Activated CD8-positive, alpha-beta memory T cell treated with anti-CD3 and anti-CD28 coated beads, Interleukin-2, amount 10 ng/mL, durations not matched to agents 7 days and 5 days (primary cell): ENCODE measurements at regions of chr9 and their contacts with region 1.

Region 1: GRCh38 chr9:127525401-127526187 is 74.3 kb downstream of the LRSAM1 start:
- DNase-seq: peak; percentile 51
- ATAC-seq: peak; percentile 55
- H3K4me3 Mint-ChIP-seq: no peak overlapping the region
- H3K27ac Mint-ChIP-seq: no peak overlapping the region
- H3K4me1 Mint-ChIP-seq: peaks cover 16% of the 10 kb centered on the region
- H3K27me3 Mint-ChIP-seq: no peaks in the 10 kb centered on the region

Region 2: GRCh38 chr9:127396808-127397497 is 128.6 kb before region 1 on chr9 and contains the start of gene SLC2A8:
- CTCF ChIA-PET with region 1: no interaction called
- DNase-seq: peak; percentile 99
- ATAC-seq: peak; percentile 94
- H3K4me3 Mint-ChIP-seq: peak within 1 kb of the TSS; percentile 68
- H3K27ac Mint-ChIP-seq: peak within 1 kb of the TSS; percentile 43
- H3K4me1 Mint-ChIP-seq: peaks cover 18% of the 10 kb centered on the region
- H3K27me3 Mint-ChIP-seq: peaks cover 28% of the 10 kb centered on the region
- total RNA-seq, gene SLC2A8: 12.1 to 26.0 TPM

Region 3: DNA sequence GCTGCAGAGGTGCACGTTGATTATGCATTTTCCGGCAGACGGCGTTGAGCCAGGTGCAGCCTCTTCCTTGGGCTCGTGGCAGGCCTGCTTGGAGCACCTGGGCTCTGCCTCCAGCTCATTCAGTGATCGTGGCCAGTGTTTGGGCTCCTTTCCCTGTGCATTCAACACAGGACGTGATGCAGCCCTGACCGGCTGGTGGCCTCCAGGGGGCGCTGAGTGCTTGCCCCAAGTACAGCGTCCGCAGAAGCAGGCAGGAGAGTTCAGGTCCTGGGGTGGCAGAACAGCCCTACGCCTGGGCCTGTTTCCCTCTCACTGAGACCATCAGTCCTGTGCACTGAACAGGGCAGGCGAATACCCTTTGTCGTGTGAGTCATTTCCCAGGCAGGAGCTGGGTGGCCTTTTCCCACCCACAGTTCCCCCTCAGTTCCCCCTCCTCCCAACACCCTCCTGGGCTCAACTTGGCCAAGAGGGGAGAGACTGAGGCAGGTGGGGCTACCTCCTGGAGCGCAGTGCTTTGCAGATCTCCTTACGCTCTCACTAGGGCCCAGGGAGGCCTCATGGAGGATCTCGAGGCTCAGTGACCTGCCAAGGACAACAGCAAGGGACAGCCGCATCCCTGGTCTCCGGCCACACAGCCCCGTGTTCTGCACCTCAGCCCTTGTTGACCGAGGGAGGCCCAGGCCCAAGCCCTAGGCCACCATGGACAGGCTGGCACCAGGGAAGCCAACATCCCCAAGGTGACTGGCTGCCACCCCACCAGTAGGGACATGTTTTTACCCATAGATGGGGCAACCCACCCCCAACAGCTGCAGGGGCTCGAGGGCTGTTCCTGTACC is 21.4 kb before region 1 on chr9:
- CTCF ChIA-PET with region 1: interaction called, 11 read pairs
- DNase-seq: peak; percentile 88
- ATAC-seq: peak; percentile 93
- H3K4me3 Mint-ChIP-seq: no peak overlapping the region
- H3K27ac Mint-ChIP-seq: no peak overlapping the region
- H3K4me1 Mint-ChIP-seq: peaks cover 6% of the 10 kb centered on the region
- H3K27me3 Mint-ChIP-seq: no peaks in the 10 kb centered on the region

Region 4: DNA sequence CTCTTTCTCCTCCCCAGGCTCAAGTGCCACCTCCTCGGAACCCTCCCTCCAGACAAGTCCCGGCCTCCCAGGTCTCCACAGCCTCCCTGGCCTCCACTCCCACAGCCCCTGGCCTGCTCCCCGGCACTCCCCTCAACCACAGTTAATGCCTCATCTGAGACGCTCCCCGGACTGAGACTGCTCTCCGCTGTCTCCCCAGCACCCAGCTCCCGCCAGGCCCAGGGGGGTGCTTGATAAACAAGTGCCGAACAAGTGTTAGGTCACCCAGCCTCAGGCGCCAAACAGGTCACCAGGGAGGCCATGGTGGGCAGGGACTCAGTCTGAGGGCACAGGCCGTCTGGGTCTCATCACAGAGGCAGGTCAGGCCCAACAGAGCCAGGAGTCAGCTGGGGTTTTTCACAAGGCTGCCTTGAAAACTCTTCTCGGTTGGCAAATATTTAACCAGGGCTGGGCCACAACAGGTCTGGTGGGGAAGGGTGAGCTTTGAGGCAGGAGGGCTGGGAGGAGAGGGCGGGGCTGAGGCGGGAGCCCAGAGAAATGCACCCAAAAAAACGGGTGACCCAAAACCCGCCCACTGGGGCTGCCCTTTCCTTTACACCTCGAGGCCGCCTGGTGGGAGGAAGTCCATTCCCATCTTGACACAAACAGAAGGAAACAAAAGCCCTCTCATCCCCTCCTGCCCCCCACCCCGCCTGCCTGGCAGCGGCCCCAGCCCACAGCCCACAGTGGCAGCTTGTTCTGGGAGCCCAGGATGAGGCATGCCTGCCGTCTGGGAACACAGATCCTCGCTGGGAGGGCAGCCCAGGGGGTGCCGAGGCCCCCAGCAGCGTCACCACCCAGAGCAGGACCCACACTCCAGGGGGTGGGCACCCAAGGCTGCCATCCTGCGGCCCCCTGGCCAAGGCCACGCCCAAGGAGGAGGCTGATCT is 19.9 kb after region 1 on chr9:
- CTCF ChIA-PET with region 1: interaction called, 15 read pairs
- DNase-seq: no peak
- ATAC-seq: no peak
- H3K4me3 Mint-ChIP-seq: no peak overlapping the region
- H3K27ac Mint-ChIP-seq: no peak overlapping the region
- H3K4me1 Mint-ChIP-seq: peaks cover 29% of the 10 kb centered on the region
- H3K27me3 Mint-ChIP-seq: no peaks in the 10 kb centered on the region

Region 5: DNA sequence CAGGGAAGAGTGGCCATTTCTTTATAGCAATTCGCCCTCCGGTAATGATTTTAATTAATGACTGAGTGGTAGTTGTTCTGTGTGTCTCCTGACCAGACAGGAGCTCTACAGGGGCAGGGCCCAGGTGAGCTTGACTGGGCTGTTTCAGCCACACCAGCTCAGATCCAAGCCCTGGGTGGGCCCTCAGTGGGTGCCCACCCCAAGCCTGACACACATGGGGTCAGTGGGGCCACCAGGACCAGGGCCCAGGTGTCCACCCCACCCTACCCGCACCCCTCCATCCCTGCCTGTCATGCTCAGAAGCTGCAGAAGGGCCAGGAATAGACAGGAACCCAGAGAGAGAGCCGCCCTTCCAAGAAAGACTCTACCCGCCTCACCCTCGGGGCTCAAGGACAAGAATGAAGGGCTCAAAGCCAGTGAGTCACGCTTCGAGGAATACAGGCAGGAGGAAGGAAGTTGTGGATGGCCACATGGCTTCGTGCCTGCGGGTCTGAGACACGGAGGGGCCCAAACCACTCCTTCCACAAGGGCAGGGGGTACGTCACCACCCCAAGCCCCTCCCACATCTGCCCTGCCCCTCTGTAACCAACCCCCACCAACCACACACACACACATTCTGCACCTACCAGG is 30.3 kb after region 1 on chr9:
- CTCF ChIA-PET with region 1: interaction called, 13 read pairs
- DNase-seq: peak; percentile 95
- ATAC-seq: peak; percentile 93
- H3K4me3 Mint-ChIP-seq: peak overlapping the region; percentile 56
- H3K27ac Mint-ChIP-seq: peak overlapping the region; percentile 93
- H3K4me1 Mint-ChIP-seq: peaks cover 77% of the 10 kb centered on the region
- H3K27me3 Mint-ChIP-seq: no peaks in the 10 kb centered on the region

Region 6: DNA sequence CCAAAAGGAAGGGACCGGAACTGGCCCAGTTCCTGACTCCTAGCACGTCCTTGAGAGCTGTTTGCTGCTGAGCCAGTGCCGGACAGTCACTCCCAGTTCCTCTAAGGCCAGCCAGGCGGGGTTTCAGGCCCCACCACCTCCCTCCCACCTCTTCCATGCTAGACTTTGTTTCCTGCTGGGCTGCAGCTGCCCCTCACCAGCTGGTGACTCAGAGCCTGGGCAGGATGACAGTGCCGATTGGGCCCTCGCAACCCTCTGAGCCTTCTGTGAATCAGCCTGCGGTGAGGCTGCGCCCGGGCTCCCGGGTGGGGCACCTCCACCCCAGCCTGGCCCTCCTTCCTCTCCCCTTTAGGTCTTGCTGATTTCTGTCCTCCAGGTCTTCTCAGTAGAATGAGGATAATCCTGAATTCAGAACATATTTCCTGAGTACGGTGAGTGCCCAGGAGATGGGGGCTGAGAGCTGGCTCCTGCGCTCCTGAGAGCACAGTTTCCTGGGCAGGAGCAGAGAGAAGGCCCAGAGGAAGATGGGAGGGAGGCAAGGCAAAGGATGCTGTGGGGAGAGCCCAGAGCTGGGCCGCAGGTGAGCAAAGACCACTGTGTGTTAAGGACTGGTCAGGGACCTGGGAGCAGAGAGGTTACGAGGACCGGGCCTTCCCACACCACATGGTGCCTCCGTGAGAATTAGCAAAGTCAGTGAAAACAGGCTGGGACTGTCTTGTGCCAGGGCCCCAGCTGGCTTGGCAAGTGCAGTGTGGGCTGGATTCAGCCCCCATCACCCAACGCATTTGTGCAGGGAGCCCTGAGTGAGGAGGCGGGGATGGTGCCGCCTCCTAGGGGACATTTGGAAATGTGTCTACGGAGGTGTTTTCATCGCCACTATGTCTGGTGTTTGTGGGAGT is 53.6 kb after region 1 on chr9:
- CTCF ChIA-PET with region 1: interaction called, 87 read pairs
- DNase-seq: peak; percentile 91
- ATAC-seq: peak; percentile 99
- H3K4me3 Mint-ChIP-seq: peak overlapping the region; percentile 76
- H3K27ac Mint-ChIP-seq: peak overlapping the region; percentile 90
- H3K4me1 Mint-ChIP-seq: peaks cover 54% of the 10 kb centered on the region
- H3K27me3 Mint-ChIP-seq: no peaks in the 10 kb centered on the region

Region 7: GRCh38 chr9:127586537-127586936 is 60.9 kb after region 1 on chr9:
- CTCF ChIA-PET with region 1: interaction called, 87 read pairs
- DNase-seq: peak; percentile 77
- ATAC-seq: peak; percentile 82
- H3K4me3 Mint-ChIP-seq: no peak overlapping the region
- H3K27ac Mint-ChIP-seq: no peak overlapping the region
- H3K4me1 Mint-ChIP-seq: peaks cover 22% of the 10 kb centered on the region
- H3K27me3 Mint-ChIP-seq: peaks cover 16% of the 10 kb centered on the region